ENCODE measurements at regions of chr5 and their contacts with region 1.

Region 1: DNA sequence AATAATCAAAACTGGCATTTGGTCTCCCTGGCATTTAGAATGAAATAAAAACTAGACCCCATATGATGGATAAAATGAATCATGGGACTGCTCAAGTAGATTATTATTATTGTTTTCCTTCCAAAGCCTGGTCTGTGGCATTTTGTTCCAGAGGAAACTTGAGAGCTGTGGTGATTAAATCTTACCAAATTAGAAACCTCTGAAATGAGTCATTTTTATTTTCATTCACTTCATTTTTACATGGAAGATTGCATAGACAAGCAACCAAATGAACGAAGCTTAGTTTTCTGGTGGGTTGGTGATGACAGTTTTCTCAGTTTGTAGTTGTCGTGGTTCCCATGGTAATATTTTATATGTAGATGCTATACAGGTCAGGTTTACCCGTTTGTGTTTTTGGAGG is 23.4 kb downstream of the PAM start:
- DNase-seq: no peak
- H3K4me3 Mint-ChIP-seq: no peak overlapping the region
- H3K27ac Mint-ChIP-seq: peak overlapping the region; percentile 20
- H3K4me1 Mint-ChIP-seq: peaks cover 73% of the 10 kb centered on the region
- H3K27me3 Mint-ChIP-seq: no peaks in the 10 kb centered on the region

Region 2: DNA sequence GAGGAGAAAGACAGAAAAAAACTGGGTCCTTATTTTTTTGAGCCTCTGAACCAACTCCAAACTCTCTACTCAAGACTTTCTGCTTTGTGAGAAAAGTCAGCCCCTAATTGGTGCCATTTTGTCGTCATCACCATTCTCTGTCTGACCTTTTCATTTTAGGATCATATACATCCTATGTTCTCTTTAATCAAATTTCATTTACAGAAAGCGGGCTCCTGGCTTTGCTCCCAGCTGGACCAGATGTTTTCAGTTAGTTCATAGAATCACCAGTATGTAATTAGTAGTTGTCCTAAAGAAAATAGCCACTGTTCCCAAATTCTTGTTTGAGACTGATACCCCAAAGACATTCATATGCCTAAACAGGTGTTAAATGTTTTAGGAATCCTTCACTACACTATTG is 453.8 kb before region 1 on chr5:
- CTCF ChIA-PET with region 1: no interaction called
- intact Hi-C with region 1: no loop called
- DNase-seq: no peak
- H3K4me3 Mint-ChIP-seq: no peak overlapping the region
- H3K27ac Mint-ChIP-seq: no peak overlapping the region
- H3K4me1 Mint-ChIP-seq: no peaks in the 10 kb centered on the region
- H3K27me3 Mint-ChIP-seq: peaks cover 5% of the 10 kb centered on the region

Region 3: GRCh38 chr5:102681407-102681983 is 97.0 kb before region 1 on chr5:
- CTCF ChIA-PET with region 1: interaction called, 11 read pairs
- intact Hi-C with region 1: loop called (anchors 1 kb)
- DNase-seq: peak; percentile 84
- H3K4me3 Mint-ChIP-seq: no peak overlapping the region
- H3K27ac Mint-ChIP-seq: no peak overlapping the region
- H3K4me1 Mint-ChIP-seq: no peaks in the 10 kb centered on the region
- H3K27me3 Mint-ChIP-seq: peaks cover 7% of the 10 kb centered on the region

Region 4: GRCh38 chr5:102762095-102762534 is 16.4 kb before region 1 on chr5:
- CTCF ChIA-PET with region 1: interaction called, 16 read pairs
- intact Hi-C with region 1: loop called (anchors 1 kb)
- DNase-seq: no peak
- H3K4me3 Mint-ChIP-seq: peak overlapping the region; percentile 48
- H3K27ac Mint-ChIP-seq: peak overlapping the region; percentile 86
- H3K4me1 Mint-ChIP-seq: peaks cover 82% of the 10 kb centered on the region
- H3K27me3 Mint-ChIP-seq: no peaks in the 10 kb centered on the region

Region 5: GRCh38 chr5:102865510-102866236 is 87.2 kb after region 1 on chr5:
- CTCF ChIA-PET with region 1: interaction called, 3 read pairs
- intact Hi-C with region 1: loop called (anchors 5 kb)
- DNase-seq: peak; percentile 55
- H3K4me3 Mint-ChIP-seq: peak overlapping the region; percentile 59
- H3K27ac Mint-ChIP-seq: no peak overlapping the region
- H3K4me1 Mint-ChIP-seq: peaks cover 9% of the 10 kb centered on the region
- H3K27me3 Mint-ChIP-seq: peaks cover 19% of the 10 kb centered on the region

Region 6: DNA sequence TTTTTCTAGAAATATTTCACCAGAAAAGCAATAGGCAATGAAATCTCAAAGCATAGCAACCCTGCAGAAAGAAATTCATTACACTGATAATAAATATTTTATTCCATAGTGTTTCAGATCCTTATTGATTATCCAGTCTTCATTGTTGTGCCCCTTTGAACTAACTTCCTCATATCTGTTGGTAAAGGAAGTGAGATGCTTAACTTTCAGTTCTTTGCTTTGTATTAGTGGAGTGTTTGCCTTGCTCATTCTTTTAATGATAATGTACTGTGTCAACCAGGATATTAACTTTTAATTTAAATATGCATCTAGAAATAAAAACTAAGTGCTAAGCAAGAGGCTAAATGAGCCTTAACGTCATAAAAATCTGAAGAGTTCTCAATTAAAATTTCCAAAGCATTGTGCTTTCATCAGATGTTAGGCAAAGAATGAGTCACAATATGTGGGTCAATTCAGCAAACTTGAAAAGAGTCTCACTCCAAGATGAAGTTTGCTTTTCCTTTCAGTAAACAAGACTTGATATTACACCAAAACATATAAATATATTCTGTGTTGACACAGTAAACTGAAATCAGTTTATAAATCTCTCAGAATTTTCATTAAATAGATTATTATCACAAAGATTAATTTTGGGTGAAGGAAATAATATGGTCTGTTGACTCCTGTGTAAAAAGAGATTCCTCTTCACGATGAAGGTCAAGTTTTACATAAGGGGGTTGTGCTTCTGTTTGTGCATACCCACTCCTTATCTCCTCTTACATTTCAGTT is 235.6 kb after region 1 on chr5:
- CTCF ChIA-PET with region 1: no interaction called
- intact Hi-C with region 1: no loop called
- DNase-seq: no peak
- H3K4me3 Mint-ChIP-seq: no peak overlapping the region
- H3K27ac Mint-ChIP-seq: no peak overlapping the region
- H3K4me1 Mint-ChIP-seq: no peaks in the 10 kb centered on the region
- H3K27me3 Mint-ChIP-seq: no peaks in the 10 kb centered on the region

Region 7: GRCh38 chr5:103119765-103120606 is 341.5 kb after region 1 on chr5 and contains the starts of genes GIN1 and PPIP5K2:
- CTCF ChIA-PET with region 1: no interaction called
- intact Hi-C with region 1: loop called (anchors 1 kb)
- DNase-seq: peak; percentile 98
- H3K4me3 Mint-ChIP-seq: peak within 1 kb of the TSS; percentile 96
- H3K27ac Mint-ChIP-seq: peak within 1 kb of the TSS; percentile 100
- H3K4me1 Mint-ChIP-seq: peaks cover 38% of the 10 kb centered on the region
- H3K27me3 Mint-ChIP-seq: no peaks in the 10 kb centered on the region
- total RNA-seq, gene GIN1: 11.0 to 13.0 TPM
- total RNA-seq, gene PPIP5K2: 35.8 to 45.0 TPM

Region 8: DNA sequence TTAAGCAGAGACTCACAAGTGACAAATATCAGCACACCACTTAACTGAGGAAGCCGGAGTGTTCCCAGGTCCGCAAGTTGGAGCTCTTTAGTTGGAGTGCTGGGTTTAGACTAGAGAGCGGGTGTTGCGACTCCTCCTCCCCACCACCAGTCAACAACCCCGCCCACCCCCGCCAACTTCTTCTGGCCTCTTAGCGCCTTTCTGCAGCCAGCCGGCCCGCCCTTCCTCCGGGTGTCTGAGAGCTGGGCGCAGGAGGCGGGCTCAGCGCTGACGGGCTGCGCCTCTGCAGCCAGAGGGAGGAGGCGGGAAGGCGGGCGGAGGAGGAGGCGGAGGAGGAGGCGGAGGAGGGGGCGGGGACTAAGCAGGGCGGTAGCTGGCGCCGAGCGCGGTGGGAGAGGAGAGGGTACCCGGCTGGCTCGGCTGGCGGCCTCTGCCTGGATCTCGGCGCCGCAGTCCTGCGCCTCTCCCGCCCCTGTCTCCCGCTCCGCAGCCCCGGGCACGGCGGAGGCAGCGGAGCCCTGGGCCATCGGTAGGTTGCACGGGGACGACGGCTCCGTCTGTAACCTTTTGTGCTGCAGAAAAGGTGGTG is 480.0 kb after region 1 on chr5 and contains the start of gene MACIR:
- CTCF ChIA-PET with region 1: no interaction called
- intact Hi-C with region 1: loop called (anchors 1 kb)
- DNase-seq: peak; percentile 97
- H3K4me3 Mint-ChIP-seq: peak within 1 kb of the TSS; percentile 90
- H3K27ac Mint-ChIP-seq: peak within 1 kb of the TSS; percentile 63
- H3K4me1 Mint-ChIP-seq: peaks cover 25% of the 10 kb centered on the region
- H3K27me3 Mint-ChIP-seq: peaks cover 3% of the 10 kb centered on the region
- total RNA-seq, gene MACIR: 5.5 TPM

Measured in activated naive CD4-positive, alpha-beta T cell treated with anti-CD3 and anti-CD28 coated beads for 36 hours (primary cell).